ENCODE measurements at regions of chr1 and their contacts with region 1.

Region 1: DNA sequence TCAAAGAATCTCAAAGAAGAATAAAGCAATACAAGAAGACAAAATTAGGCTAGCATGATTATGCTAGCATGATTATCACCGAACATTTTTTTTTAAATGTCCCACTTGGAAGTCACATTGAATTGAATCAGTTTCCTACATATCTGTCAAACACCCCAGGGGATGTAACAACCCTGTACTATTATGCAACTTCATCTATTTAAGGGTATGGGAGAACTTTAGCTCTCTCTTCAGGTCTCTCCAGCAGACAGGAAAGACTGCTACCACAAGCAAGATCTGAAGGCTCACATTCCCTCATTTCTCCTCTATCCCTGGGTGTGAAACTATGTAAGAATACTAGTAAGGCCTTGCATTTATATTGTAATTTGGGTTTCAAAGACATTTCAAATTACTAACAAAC is 52.8 kb downstream of the EDEM3 start:
- DNase-seq: no peak
- ATAC-seq: no peak
- H3K4me3 ChIP-seq: no peak overlapping the region
- H3K4me3 Mint-ChIP-seq: no peak overlapping the region
- H3K27ac ChIP-seq: no peak overlapping the region
- H3K27ac Mint-ChIP-seq: peak overlapping the region; percentile 34
- H3K4me1 ChIP-seq: no peaks in the 10 kb centered on the region
- H3K4me1 Mint-ChIP-seq: peaks cover 17% of the 10 kb centered on the region
- H3K27me3 ChIP-seq: no peaks in the 10 kb centered on the region
- H3K27me3 Mint-ChIP-seq: no peaks in the 10 kb centered on the region
- CTCF ChIP-seq: no peak

Region 2: GRCh38 chr1:182869241-182869666 is 1832.6 kb before region 1 on chr1:
- CTCF ChIA-PET with region 1: no interaction called
- POLR2A ChIA-PET with region 1: no interaction called
- intact Hi-C with region 1: loop called in 1 of 2 experiments (anchors 10 kb)
- DNase-seq: peak in 2 of 14 experiments; percentile 6 to 15
- ATAC-seq: no peak
- H3K4me3 ChIP-seq: no peak overlapping the region
- H3K4me3 Mint-ChIP-seq: no peak overlapping the region
- H3K27ac ChIP-seq: no peak overlapping the region
- H3K27ac Mint-ChIP-seq: peak overlapping the region; percentile 27
- H3K4me1 ChIP-seq: no peaks in the 10 kb centered on the region
- H3K4me1 Mint-ChIP-seq: peaks cover 20% of the 10 kb centered on the region
- H3K27me3 ChIP-seq: no peaks in the 10 kb centered on the region
- H3K27me3 Mint-ChIP-seq: no peaks in the 10 kb centered on the region
- CTCF ChIP-seq: no peak

Region 3: DNA sequence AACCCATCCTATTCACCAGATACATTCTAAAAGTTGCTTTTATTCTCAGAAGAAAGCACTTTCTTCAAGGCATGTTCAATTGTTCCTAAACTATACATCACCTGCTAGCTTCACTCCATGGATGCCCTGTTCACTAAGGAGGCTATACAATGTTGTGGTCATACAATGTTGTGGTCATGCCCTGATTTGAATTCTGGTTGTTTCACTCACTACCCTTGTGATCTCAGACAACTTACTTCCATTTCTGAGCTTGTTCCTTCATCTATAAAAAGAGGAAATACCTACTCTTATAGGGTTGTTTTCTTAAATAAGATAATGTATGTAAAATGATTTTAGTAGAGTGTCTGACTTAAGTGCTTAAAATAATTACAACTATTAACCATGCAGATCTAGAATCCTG is 33.2 kb after region 1 on chr1:
- CTCF ChIA-PET with region 1: no interaction called
- POLR2A ChIA-PET with region 1: no interaction called
- intact Hi-C with region 1: loop called in 1 of 2 experiments (anchors 2 kb)
- DNase-seq: no peak
- ATAC-seq: no peak
- H3K4me3 ChIP-seq: no peak overlapping the region
- H3K4me3 Mint-ChIP-seq: no peak overlapping the region
- H3K27ac ChIP-seq: no peak overlapping the region
- H3K27ac Mint-ChIP-seq: no peak overlapping the region
- H3K4me1 ChIP-seq: no peaks in the 10 kb centered on the region
- H3K4me1 Mint-ChIP-seq: peaks cover 34% of the 10 kb centered on the region
- H3K27me3 ChIP-seq: no peaks in the 10 kb centered on the region
- H3K27me3 Mint-ChIP-seq: no peaks in the 10 kb centered on the region
- CTCF ChIP-seq: no peak

Region 4: DNA sequence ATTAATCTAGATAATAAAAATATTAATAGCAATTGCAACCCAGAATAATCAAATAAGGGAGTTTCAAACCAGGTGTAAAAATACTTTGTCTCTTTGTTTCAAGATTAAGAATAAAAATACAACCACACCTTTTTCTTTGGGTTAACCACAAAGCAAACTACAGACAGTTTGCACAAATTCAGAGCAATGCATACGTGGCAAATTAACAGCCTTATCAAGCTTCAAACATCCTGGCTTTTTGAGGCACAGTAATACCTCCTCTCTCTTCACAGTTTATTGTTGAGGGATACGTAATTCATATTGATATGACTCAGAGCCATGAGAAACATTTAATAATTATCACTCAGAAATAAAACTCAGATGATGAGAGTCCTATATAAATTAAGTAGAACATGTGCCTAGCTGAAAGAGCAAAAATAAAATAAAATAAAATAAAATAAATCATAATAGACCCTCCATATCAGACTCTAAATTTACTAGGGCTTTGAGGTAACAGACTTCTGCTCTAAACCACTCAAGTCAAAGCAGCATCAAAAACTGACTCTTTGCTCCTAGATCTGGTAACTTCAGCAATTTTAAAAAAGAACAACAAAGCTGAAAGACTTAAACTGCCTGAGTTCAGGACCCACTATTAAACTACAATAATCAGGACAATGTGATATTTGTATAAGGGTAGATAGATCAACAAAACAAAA is 41.4 kb after region 1 on chr1:
- CTCF ChIA-PET with region 1: no interaction called
- POLR2A ChIA-PET with region 1: no interaction called
- intact Hi-C with region 1: loop called in 1 of 2 experiments (anchors 5 kb)
- DNase-seq: peak in 5 of 14 experiments; percentile 29 to 87 (median 80)
- ATAC-seq: peak; percentile 92
- H3K4me3 ChIP-seq: no peak overlapping the region
- H3K4me3 Mint-ChIP-seq: peak overlapping the region; percentile 49
- H3K27ac ChIP-seq: peak overlapping the region; percentile 55 to 65
- H3K27ac Mint-ChIP-seq: peak overlapping the region; percentile 90
- H3K4me1 ChIP-seq: peaks cover 10% of the 10 kb centered on the region
- H3K4me1 Mint-ChIP-seq: peaks cover 79% of the 10 kb centered on the region
- H3K27me3 ChIP-seq: no peaks in the 10 kb centered on the region
- H3K27me3 Mint-ChIP-seq: no peaks in the 10 kb centered on the region
- CTCF ChIP-seq: no peak

Measured in CD4-positive, alpha-beta T cell (primary cell).